SK-N-SH (cell line): ENCODE measurements at regions of chr1 and their contacts with region 1.

Region 1: DNA sequence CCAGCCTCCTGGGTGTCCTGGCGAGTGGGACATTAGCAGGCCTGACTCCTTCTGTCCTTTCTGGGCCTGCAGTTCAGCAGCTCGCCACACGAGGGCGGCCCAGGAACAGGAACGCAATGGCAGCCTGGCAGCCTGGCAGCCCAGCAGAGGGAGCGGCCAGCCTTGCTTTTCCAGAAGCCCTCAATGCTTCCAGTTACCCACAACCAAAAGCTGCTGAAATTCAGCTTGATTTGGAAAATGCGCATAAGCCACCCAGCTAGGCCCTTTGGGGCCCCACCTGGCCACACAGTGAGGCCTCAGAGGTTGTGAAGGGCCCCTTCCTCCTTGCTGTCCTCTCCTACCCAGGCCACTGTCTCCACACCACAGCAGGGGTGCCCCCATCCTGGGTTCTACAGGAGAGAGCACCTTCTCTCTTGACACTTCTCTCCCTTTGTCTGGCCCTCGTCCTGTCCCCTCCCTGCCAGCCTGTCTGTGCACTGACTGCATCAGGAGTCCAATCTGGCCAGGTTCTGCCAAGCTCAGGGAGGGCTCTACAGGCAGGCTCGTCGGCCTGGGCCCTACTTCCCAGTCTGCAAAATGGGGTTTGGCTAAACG is 103.4 kb upstream of the VAMP3 start:
- DNase-seq: peak; percentile 88
- H3K4me3 ChIP-seq: peak overlapping the region in 1 of 2 experiments; percentile 58; a peak in 2 of 4 replicates
- H3K27ac ChIP-seq: peak overlapping the region; percentile 72 to 100
- H3K4me1 ChIP-seq: peaks cover 5 to 53% of the 10 kb centered on the region in 2 experiments; a peak in 3 of 4 replicates
- H3K27me3 ChIP-seq: no peaks in the 10 kb centered on the region
- CTCF ChIP-seq: peak; percentile 94
- EP300 ChIP-seq: no peak
- RAD21 ChIP-seq: peak; percentile 98

Region 2: DNA sequence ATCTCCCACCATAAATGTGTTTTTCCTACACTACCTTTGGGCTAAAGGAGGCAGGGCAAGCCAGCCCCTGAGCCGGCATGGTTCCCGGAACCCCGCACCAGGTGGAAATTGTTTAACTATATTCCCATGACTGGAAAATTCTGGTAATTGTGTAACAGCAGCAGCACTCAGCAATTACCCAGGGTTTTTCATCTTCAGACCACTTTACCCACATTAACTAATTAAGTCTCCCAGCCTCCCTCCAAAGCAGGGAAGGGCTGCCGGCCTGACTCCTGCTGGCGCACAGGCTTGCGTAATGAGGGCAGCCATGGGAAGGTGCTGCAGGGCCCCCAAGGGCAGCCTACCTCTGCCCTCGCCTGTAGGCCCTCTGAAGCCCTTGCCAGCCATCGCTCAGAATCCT is 37.3 kb before region 1 on chr1:
- CTCF ChIA-PET with region 1: interaction called, 6 read pairs
- POLR2A ChIA-PET with region 1: interaction called, 12 read pairs
- DNase-seq: peak; percentile 90
- H3K4me3 ChIP-seq: no peak overlapping the region
- H3K27ac ChIP-seq: peak overlapping the region; percentile 32 to 100; a peak in 3 of 4 replicates
- H3K4me1 ChIP-seq: peaks cover 0 to 89% of the 10 kb centered on the region in 2 experiments; a peak in 2 of 4 replicates
- H3K27me3 ChIP-seq: peaks cover 6% of the 10 kb centered on the region; the same call in 1 of the 2 replicates
- CTCF ChIP-seq: no peak
- EP300 ChIP-seq: peak in 1 of 2 experiments; percentile 93; a peak in 2 of 4 replicates
- RAD21 ChIP-seq: peak; percentile 41

Region 3: DNA sequence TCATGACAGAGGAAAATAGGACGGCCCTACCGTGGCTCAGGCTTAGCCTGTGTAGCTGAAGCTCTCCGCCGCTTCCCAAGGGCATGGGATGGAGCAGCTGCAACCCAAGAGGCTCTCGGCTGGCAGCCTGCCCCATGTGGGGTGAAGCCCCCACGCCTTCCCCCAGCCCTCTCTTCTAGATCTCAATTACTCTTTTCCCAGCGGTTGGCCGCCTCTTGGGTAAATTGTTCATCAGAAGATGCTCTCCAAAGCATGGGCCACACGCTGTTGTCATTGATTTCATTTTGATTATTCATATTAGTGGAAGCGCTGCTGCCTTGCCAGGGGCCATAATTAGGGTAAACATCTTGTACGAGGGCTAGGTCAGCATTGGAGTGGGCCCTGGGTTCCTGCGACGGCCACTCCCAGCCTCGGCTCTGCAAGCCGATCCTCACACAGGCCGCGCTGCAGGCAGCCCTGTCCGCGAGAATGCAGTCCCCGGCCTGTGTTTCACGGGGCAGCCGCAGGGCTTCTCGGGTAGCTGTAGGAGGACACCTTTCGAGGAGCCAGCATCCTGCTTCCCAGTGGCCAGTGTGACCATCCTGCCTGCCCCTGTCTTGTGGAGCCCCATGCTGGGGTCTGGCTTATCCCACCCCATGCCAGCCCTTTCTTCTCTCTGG is 11.0 kb before region 1 on chr1:
- CTCF ChIA-PET with region 1: interaction called, 28 read pairs
- POLR2A ChIA-PET with region 1: interaction called, 4 read pairs
- DNase-seq: no peak
- H3K4me3 ChIP-seq: no peak overlapping the region
- H3K27ac ChIP-seq: no peak overlapping the region
- H3K4me1 ChIP-seq: peaks cover 0 to 7% of the 10 kb centered on the region in 2 experiments; a peak in 1 of 4 replicates
- H3K27me3 ChIP-seq: no peaks in the 10 kb centered on the region
- CTCF ChIP-seq: no peak
- EP300 ChIP-seq: no peak
- RAD21 ChIP-seq: no peak

Region 4: GRCh38 chr1:7704214-7705047 is 36.7 kb after region 1 on chr1:
- CTCF ChIA-PET with region 1: interaction called, 58 read pairs
- POLR2A ChIA-PET with region 1: interaction called, 60 read pairs
- DNase-seq: peak; percentile 100
- H3K4me3 ChIP-seq: peak overlapping the region in 1 of 2 experiments; percentile 64; a peak in 2 of 4 replicates
- H3K27ac ChIP-seq: peak overlapping the region in 1 of 2 experiments; percentile 74; a peak in 1 of 4 replicates
- H3K4me1 ChIP-seq: peaks cover 0 to 8% of the 10 kb centered on the region in 2 experiments; a peak in 1 of 4 replicates
- H3K27me3 ChIP-seq: peaks cover 6% of the 10 kb centered on the region; the same call in 1 of the 2 replicates
- CTCF ChIP-seq: no peak
- EP300 ChIP-seq: no peak
- RAD21 ChIP-seq: no peak

Region 5: GRCh38 chr1:7726623-7727022 is 58.9 kb after region 1 on chr1:
- CTCF ChIA-PET with region 1: interaction called, 18 read pairs
- POLR2A ChIA-PET with region 1: no interaction called
- DNase-seq: no peak
- H3K4me3 ChIP-seq: no peak overlapping the region
- H3K27ac ChIP-seq: no peak overlapping the region; a peak in 1 of 4 replicates
- H3K4me1 ChIP-seq: peaks cover 0 to 20% of the 10 kb centered on the region in 2 experiments; a peak in 1 of 4 replicates
- H3K27me3 ChIP-seq: no peaks in the 10 kb centered on the region
- CTCF ChIP-seq: no peak
- EP300 ChIP-seq: no peak
- RAD21 ChIP-seq: no peak

Region 6: GRCh38 chr1:7770997-7771822 is 103.5 kb after region 1 on chr1 and contains the start of gene VAMP3:
- CTCF ChIA-PET with region 1: interaction called, 139 read pairs
- POLR2A ChIA-PET with region 1: interaction called, 8 read pairs
- DNase-seq: peak; percentile 99
- H3K4me3 ChIP-seq: peak within 1 kb of the TSS; percentile 67 to 98
- H3K27ac ChIP-seq: peak within 1 kb of the TSS; percentile 71 to 78; a peak in 3 of 4 replicates
- H3K4me1 ChIP-seq: peaks cover 5 to 19% of the 10 kb centered on the region in 2 experiments; a peak in 3 of 4 replicates
- H3K27me3 ChIP-seq: no peaks in the 10 kb centered on the region
- CTCF ChIP-seq: no peak
- EP300 ChIP-seq: no peak
- RAD21 ChIP-seq: no peak
- polyA plus RNA-seq, gene VAMP3: 96.4 and 114 TPM in 2 replicates

Region 7: DNA sequence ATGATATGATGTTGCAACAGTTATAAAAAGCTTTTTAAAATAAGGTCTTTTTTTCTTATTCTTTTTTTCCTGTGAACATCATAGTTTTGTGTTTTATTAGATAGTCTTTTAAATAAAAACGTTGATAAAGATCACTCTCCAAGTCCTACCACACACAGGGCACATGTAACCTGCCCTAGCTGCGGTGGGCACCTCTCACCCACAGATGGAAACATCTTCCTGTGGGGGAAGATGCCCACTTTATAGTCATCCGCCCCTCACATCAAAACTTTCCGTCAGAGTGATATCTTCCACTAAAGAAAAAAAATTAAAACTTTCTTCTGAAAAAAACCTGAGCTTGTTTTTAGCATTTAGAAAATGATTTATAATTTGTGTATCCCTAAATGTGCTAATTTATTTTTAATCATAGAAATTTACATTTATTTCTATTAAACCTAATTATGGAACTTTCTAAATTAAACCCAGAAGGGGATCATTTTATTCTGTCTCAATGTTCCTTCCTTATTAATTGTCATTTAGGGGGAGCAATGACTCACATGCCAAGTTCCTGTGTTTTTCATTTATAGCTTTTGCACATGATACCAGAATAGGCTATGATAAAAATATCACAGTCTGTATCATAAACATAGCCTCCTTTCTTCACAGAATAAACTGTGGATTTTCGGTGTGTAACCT is 248.2 kb after region 1 on chr1:
- CTCF ChIA-PET with region 1: interaction called, 13 read pairs
- POLR2A ChIA-PET with region 1: interaction called, 3 read pairs
- DNase-seq: no peak
- H3K4me3 ChIP-seq: no peak overlapping the region
- H3K27ac ChIP-seq: no peak overlapping the region
- H3K4me1 ChIP-seq: no peaks in the 10 kb centered on the region
- H3K27me3 ChIP-seq: no peaks in the 10 kb centered on the region
- CTCF ChIP-seq: no peak
- EP300 ChIP-seq: no peak
- RAD21 ChIP-seq: no peak